IMR-90 (cell line): ENCODE measurements at regions of chr5 and their contacts with region 1.

Region 1: DNA sequence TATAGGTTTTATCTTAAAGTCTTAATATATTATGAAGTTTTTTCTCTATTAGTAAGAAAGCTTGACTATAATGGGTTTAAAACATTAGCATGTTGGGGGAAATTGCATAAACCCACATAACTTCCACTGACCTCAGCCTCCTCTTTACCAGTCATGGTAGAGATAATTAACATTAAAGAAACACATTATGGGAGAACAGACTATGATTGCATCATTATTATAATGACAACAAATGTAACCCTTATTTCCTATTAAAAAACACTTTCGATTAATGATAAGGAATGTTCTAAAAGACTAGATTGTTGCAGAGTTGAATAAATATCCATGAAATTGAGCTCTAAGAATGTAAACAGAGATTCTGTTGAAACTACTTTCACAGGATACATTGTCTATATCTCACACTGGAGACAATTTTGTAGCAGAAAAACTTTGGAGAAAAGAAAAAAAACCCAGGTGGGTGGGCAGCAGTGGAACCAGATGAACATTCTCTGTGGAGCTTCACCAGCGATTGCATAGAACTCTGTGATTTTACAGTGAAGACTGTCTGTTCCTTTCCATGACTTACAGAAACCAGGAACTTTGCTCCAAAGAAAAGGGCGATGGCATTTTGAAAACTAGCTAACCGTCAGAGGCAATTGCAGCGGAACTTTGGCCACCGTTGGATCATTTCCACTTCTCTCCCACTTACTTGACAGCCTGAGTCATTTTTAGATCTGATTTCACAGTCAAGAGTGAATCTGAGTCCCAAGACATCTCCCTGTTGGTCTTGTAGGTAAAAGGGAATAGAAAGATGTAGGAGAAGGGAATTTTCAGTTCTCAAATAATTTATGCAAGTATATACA is 21.0 kb upstream of the ERAP2 start:
- DNase-seq: peak; percentile 84
- ATAC-seq: peak; percentile 56
- H3K4me3 ChIP-seq: no peak overlapping the region; the same call in 1 of the 2 replicates
- H3K27ac ChIP-seq: peak overlapping the region; percentile 67
- H3K4me1 ChIP-seq: peaks cover 6% of the 10 kb centered on the region; the same call in 1 of the 2 replicates
- H3K27me3 ChIP-seq: no peaks in the 10 kb centered on the region
- CTCF ChIP-seq: no peak
- POLR2A ChIP-seq: no peak
- RAD21 ChIP-seq: no peak

Region 2: GRCh38 chr5:96807075-96807654 is 48.1 kb before region 1 on chr5:
- CTCF ChIA-PET with region 1: no interaction called
- POLR2A ChIA-PET with region 1: no interaction called
- dilution Hi-C with region 1: no loop called
- in situ Hi-C with region 1: no loop called
- intact Hi-C with region 1: loop called (anchors 1 kb)
- DNase-seq: peak; percentile 53
- ATAC-seq: peak; percentile 65
- H3K4me3 ChIP-seq: peak overlapping the region; percentile 72
- H3K27ac ChIP-seq: peak overlapping the region; percentile 94
- H3K4me1 ChIP-seq: no peaks in the 10 kb centered on the region
- H3K27me3 ChIP-seq: no peaks in the 10 kb centered on the region
- CTCF ChIP-seq: no peak
- POLR2A ChIP-seq: 0 out of 2 replicates have a peak, but pooled peaks have one; percentile 56
- RAD21 ChIP-seq: 0 out of 2 replicates have a peak, but pooled peaks have one; percentile 11

Region 3: DNA sequence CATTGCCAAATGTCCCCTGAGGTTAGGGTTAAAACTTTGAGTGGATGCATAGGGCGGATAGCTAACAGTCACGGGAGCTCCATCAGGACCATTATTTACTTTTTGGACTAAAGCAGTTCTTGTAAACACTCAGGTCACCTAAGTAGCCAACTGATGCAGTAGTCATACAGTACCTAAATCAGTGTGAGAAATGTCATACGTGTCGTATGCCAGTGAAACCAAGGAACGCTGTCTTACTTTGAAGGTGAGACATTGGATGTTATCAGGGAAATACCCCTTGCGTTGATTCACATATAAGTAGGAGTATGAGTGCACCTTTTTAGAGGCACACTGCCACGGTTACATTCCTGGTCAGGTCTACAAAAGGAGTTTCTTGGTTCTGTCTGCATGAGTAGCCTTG is 182.6 kb after region 1 on chr5:
- CTCF ChIA-PET with region 1: no interaction called
- POLR2A ChIA-PET with region 1: no interaction called
- dilution Hi-C with region 1: no loop called
- in situ Hi-C with region 1: no loop called
- intact Hi-C with region 1: no loop called
- DNase-seq: no peak
- ATAC-seq: no peak
- H3K4me3 ChIP-seq: no peak overlapping the region
- H3K27ac ChIP-seq: no peak overlapping the region
- H3K4me1 ChIP-seq: no peaks in the 10 kb centered on the region
- H3K27me3 ChIP-seq: no peaks in the 10 kb centered on the region; the same call in 1 of the 2 replicates
- CTCF ChIP-seq: no peak
- POLR2A ChIP-seq: no peak
- RAD21 ChIP-seq: no peak